Activated CD4-positive, alpha-beta T cell treated with anti-CD3 and anti-CD28 coated beads, Interleukin-2, amount 10 ng/mL, durations not matched to agents 7 days and 5 days (primary cell): ENCODE measurements at regions of chr7 and their contacts with region 1.

Region 1: GRCh38 chr7:21412410-21412851 is 15.5 kb upstream of the SP4 start:
- DNase-seq: peak; percentile 27
- H3K4me3 Mint-ChIP-seq: no peak overlapping the region
- H3K27ac Mint-ChIP-seq: peak overlapping the region; percentile 87
- H3K4me1 Mint-ChIP-seq: peaks cover 53% of the 10 kb centered on the region
- H3K27me3 Mint-ChIP-seq: peaks cover 5% of the 10 kb centered on the region

Region 2: DNA sequence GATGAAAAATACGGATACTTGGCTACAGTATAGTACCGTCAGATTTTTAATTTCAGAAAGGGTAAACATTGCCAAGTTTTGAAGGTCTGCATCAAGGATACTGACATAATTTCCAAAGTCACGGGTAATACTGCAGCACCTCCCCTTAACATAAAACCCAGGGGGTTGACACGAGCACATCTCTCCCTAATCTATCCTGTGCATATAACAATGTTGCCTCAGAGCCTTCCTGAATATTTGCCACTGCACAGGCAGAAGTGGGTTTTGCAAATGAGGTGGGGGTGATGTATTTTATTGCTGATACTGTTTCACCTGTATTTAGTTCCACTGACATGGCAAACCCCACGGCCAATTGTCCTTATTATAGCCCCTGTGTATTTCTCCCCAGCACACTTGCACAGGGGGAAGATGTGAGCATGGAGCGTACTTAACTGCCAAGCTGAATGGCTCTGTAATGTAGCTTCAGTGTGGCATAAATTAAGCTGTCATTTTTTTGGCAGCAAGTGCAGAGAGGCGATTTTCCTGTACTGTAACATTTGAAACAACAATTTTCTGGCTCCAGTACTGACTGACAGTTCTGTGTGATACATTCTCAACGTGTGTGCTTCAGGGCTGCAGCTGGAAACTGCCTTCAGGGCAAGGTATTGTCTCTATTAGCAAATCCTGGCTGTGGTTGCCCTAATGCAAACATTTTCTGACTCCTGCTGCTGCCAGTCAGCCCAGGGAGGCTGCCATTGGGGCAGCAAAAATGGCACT is 284.2 kb before region 1 on chr7:
- CTCF ChIA-PET with region 1: no interaction called
- POLR2A ChIA-PET with region 1: no interaction called
- DNase-seq: no peak
- H3K4me3 Mint-ChIP-seq: no peak overlapping the region
- H3K27ac Mint-ChIP-seq: no peak overlapping the region
- H3K4me1 Mint-ChIP-seq: no peaks in the 10 kb centered on the region
- H3K27me3 Mint-ChIP-seq: peaks cover 3% of the 10 kb centered on the region

Region 3: GRCh38 chr7:21198921-21199320 is 213.5 kb before region 1 on chr7:
- CTCF ChIA-PET with region 1: no interaction called
- POLR2A ChIA-PET with region 1: no interaction called
- DNase-seq: no peak
- H3K4me3 Mint-ChIP-seq: no peak overlapping the region
- H3K27ac Mint-ChIP-seq: no peak overlapping the region
- H3K4me1 Mint-ChIP-seq: peaks cover 4% of the 10 kb centered on the region
- H3K27me3 Mint-ChIP-seq: peaks cover 2% of the 10 kb centered on the region

Region 4: DNA sequence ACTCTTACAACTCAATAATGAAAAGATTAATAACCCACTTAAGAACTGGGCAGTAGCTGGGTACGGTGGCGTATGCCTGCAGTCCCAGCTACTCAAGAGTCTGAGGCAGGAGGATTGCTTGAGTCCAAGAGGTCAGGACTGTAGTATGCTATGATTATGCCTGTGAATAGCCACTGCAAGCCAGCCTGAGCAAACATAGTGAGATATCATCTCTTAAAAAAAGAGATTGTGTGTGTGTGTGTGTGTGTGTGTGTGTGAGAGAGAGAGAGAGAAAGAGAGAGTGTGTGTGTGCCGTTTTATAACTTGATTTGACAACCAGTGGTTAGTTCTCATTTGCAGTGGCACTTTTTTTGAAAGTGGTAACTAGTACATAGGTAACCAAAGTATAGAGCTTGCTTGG is 11.8 kb before region 1 on chr7:
- CTCF ChIA-PET with region 1: interaction called, 23 read pairs
- POLR2A ChIA-PET with region 1: no interaction called
- DNase-seq: no peak
- H3K4me3 Mint-ChIP-seq: no peak overlapping the region
- H3K27ac Mint-ChIP-seq: no peak overlapping the region
- H3K4me1 Mint-ChIP-seq: no peaks in the 10 kb centered on the region
- H3K27me3 Mint-ChIP-seq: no peaks in the 10 kb centered on the region

Region 5: GRCh38 chr7:21461282-21461681 is 48.9 kb after region 1 on chr7:
- CTCF ChIA-PET with region 1: no interaction called
- POLR2A ChIA-PET with region 1: no interaction called
- DNase-seq: no peak
- H3K4me3 Mint-ChIP-seq: no peak overlapping the region
- H3K27ac Mint-ChIP-seq: no peak overlapping the region
- H3K4me1 Mint-ChIP-seq: peaks cover 18% of the 10 kb centered on the region
- H3K27me3 Mint-ChIP-seq: no peaks in the 10 kb centered on the region